ENCODE measurements at regions of chr6 and their contacts with region 1.

Region 1: DNA sequence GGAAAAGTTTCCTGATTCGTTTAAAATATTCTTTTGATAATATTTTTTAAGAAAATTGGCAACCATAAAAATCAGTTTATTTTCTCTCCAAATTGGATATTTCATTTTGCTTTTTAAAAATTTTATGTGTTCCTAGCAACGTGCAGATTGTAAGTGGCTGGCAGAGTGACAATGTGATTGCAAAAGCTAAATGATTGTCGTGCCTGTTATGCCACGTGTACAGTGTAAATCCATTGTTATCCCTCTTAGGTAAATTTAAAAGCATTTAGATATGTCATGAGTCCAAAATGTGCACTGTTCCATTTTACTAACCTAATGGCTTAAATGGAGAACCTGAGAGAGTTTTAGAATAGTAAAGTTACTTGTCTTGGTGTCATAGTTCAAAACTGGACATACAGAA is 94.4 kb upstream of the ADGRF4 start:
- ATAC-seq: no peak
- H3K4me3 ChIP-seq: no peak overlapping the region
- H3K27ac ChIP-seq: no peak overlapping the region
- H3K4me1 ChIP-seq: no peaks in the 10 kb centered on the region

Region 2: GRCh38 chr6:47111685-47112084 is 492.3 kb before region 1 on chr6:
- in situ Hi-C with region 1: no loop called
- ATAC-seq: no peak
- H3K4me3 ChIP-seq: no peak overlapping the region
- H3K27ac ChIP-seq: no peak overlapping the region
- H3K4me1 ChIP-seq: no peaks in the 10 kb centered on the region

Region 3: DNA sequence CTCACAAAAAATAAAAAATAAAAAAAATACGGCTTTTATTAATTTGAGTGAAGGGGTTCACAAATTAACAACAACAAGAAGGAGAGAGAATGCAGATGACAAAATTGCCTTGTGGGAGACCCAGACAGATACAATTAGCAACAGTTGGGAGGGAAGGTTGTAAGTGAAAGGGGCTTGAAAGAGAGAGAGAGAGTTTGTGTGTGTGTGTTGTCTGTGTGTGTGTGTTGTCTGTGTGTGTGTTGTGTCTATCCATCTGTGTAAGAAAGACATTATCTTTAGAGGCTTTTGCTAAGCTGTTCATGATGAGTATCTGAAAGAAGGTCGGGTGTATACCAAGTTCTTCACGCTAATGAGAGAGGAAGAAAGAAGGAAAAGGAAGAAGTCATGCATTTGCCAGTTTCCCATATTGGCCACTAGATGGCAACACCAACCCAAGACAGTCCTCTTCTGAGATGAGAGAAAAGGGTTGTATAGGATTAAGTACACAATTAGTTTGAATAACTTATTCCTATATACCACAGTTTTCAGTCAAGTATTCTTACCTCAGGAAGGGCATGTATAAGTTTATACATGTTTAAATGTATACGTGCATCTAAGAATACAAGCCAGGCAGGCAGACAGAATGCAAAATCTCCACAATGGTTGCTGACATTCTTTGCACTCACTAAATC is 190.1 kb before region 1 on chr6:
- in situ Hi-C with region 1: loop called in 1 of 9 experiments (anchors 25 kb)
- ATAC-seq: peak; percentile 52 to 94 (median 73)
- H3K4me3 ChIP-seq: no peak overlapping the region
- H3K27ac ChIP-seq: no peak overlapping the region
- H3K4me1 ChIP-seq: no peaks in the 10 kb centered on the region

Region 4: DNA sequence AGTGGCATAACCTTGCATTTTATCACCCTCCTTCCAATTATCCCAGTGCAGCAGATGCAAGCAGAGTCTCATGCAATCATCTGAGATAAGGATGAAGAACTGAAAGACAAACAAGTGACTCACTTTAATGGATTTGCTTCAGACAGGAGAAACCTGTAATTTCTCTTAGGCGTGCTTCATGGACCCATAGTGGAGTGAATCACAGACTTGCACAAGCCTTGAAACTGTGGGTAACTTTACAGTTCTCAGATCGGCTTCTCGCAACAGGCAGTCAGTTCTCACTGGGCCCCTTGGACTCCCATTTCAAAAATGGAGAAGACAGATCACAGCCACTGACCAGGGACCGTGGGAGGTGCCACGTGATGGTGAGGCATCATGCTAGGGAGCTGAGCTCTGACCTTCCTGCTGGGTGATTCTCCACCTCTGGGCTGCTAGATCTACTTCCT is 94.4 kb after region 1 on chr6 and contains the start of gene ADGRF4:
- in situ Hi-C with region 1: no loop called
- ATAC-seq: peak in 2 of 8 experiments; percentile 20 to 52
- H3K4me3 ChIP-seq: no peak within 1 kb of the TSS
- H3K27ac ChIP-seq: no peak within 1 kb of the TSS
- H3K4me1 ChIP-seq: no peaks in the 10 kb centered on the region
- total RNA-seq, gene ADGRF4: 0.08 to 0.36 (median 0.19) TPM in 3 of 8 experiments, not detected in the others

Region 5: DNA sequence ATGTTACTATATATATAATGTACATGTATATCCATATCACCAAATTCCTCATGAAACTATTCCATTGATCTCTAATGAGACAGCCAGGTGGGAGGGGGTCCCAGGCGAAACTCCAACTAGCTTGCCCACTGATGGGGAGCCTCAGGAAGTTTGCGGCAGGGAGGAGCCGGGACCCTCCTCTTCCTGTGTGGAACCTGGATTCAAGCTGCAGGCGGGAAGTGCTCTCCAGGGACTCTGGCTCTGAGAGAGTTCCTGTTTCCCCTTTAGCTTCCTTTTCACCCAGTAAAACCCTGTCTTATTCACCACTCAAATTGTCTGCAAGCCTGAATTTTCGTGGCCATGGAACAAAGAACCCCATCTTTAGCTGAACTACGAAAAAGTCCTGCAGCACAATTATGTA is 330.0 kb after region 1 on chr6:
- in situ Hi-C with region 1: no loop called
- ATAC-seq: no peak
- H3K4me3 ChIP-seq: no peak overlapping the region
- H3K27ac ChIP-seq: no peak overlapping the region
- H3K4me1 ChIP-seq: peaks cover 6 to 23% of the 10 kb centered on the region in 2 donors

Region 6: DNA sequence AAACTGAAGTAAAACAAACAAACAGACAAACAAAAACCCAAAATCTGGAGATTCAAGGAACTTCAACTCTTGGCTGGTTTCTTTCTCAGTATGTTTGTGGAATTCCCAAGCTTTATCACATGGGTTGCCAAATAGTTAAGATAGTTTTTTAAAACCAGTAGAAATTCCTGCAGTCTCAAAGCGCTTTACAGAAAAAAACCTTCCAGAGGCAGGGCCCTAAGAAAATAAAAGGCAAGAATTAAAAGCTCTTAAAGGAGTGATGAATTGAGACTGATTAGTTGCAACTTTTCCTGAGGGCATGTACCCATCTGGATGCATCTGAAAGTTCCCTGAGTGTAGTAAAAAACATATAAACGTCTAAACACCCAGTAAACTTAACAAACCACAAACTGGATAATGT is 532.9 kb after region 1 on chr6:
- in situ Hi-C with region 1: no loop called
- ATAC-seq: no peak
- H3K4me3 ChIP-seq: no peak overlapping the region
- H3K27ac ChIP-seq: no peak overlapping the region
- H3K4me1 ChIP-seq: no peaks in the 10 kb centered on the region

Measured in motor neuron (in vitro differentiated cells).